ENCODE measurements at regions of chr6 and their contacts with region 1.

Region 1: DNA sequence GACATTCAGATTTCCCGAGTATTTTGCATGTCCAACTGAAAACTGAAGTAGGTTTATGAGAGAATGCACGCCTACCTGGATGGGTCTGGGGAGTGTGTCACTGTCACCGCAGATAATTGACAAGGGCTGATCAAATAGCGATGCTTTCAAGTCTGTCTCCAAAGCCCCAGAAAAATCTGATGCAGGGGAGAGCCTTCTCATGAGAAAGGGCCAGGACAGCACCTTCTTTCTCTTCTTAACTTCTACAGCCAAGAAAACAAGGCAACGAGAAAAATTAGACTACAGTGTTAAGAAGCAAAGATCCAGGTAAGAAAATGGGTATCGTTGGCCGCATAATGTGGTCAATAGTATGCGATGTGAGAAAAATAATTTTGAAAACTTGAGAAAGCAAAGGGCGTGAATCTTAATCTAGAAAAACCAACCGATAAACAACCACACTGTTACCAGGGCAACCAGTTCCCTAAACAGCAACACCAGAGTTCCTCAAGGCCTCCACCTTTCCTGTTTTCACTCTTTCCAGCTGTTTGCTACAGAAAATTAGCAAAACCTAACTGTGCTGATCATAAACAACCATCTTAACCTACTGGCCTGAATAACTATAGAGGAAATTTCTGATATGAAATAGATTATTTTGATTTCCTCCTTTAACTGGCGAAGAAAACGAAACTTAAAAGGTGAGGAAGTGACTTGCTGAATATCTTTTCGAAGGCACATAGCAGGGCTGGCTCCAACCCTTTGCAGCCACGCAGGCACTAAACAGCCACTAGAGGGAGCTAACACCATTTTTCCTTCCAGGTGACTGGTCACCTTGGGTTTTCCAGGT is 2.6 kb downstream of the TAGAP start:
- DNase-seq: peak; percentile 84 to 97 (median 92)
- H3K4me3 ChIP-seq: peak overlapping the region; percentile 69 to 96 (median 84)
- H3K4me3 Mint-ChIP-seq: peak overlapping the region; percentile 96
- H3K27ac ChIP-seq: peak overlapping the region; percentile 99 to 100
- H3K27ac Mint-ChIP-seq: peak overlapping the region; percentile 100
- H3K4me1 ChIP-seq: peaks cover 68 to 75% of the 10 kb centered on the region in 2 donors
- H3K4me1 Mint-ChIP-seq: peaks cover 63% of the 10 kb centered on the region
- H3K27me3 ChIP-seq: no peaks in the 10 kb centered on the region
- H3K27me3 Mint-ChIP-seq: peaks cover 0 to 2% (median 2%) of the 10 kb centered on the region in 3 donors
- CTCF ChIP-seq: peak; percentile 100

Region 2: GRCh38 chr6:158999666-159000403 is 42.4 kb before region 1 on chr6 and contains the start of gene RSPH3:
- intact Hi-C with region 1: loop called (anchors 5 kb)
- DNase-seq: peak; percentile 74 to 79 (median 75)
- H3K4me3 ChIP-seq: peak within 1 kb of the TSS; percentile 61 to 90 (median 80)
- H3K4me3 Mint-ChIP-seq: peak within 1 kb of the TSS; percentile 99 to 100
- H3K27ac ChIP-seq: peak within 1 kb of the TSS; percentile 82 to 87
- H3K27ac Mint-ChIP-seq: peak within 1 kb of the TSS; percentile 90 to 96 (median 95)
- H3K4me1 ChIP-seq: peaks cover 34 to 48% of the 10 kb centered on the region in 2 donors
- H3K4me1 Mint-ChIP-seq: peaks cover 43% of the 10 kb centered on the region
- H3K27me3 ChIP-seq: no peaks in the 10 kb centered on the region
- H3K27me3 Mint-ChIP-seq: peaks cover 0 to 3% (median 1%) of the 10 kb centered on the region in 3 donors
- CTCF ChIP-seq: no peak
- polyA plus RNA-seq, gene RSPH3: 2.8 to 9.6 (median 4.6) TPM

Region 3: GRCh38 chr6:159008656-159009288 is 33.4 kb before region 1 on chr6:
- intact Hi-C with region 1: loop called (anchors 5 kb)
- DNase-seq: peak; percentile 22 to 76 (median 49)
- H3K4me3 ChIP-seq: peak overlapping the region in 1 of 3 experiments; percentile 48
- H3K4me3 Mint-ChIP-seq: peak overlapping the region; percentile 38 to 54
- H3K27ac ChIP-seq: peak overlapping the region in 1 of 2 donors; percentile 68
- H3K27ac Mint-ChIP-seq: peak overlapping the region in 6 of 7 donors; percentile 12 to 71 (median 63)
- H3K4me1 ChIP-seq: peaks cover 29 to 37% of the 10 kb centered on the region in 2 donors
- H3K4me1 Mint-ChIP-seq: peaks cover 45% of the 10 kb centered on the region
- H3K27me3 ChIP-seq: no peaks in the 10 kb centered on the region
- H3K27me3 Mint-ChIP-seq: peaks cover 0 to 2% (median 0%) of the 10 kb centered on the region in 3 donors
- CTCF ChIP-seq: peak; percentile 75

Region 4: GRCh38 chr6:159062564-159062945 is 20.3 kb after region 1 on chr6:
- intact Hi-C with region 1: loop called in 1 of 2 experiments (anchors 2 kb)
- DNase-seq: peak; percentile 46 to 68 (median 63)
- H3K4me3 ChIP-seq: peak overlapping the region in 1 of 3 experiments; percentile 52
- H3K4me3 Mint-ChIP-seq: peak overlapping the region; percentile 39 to 75
- H3K27ac ChIP-seq: peak overlapping the region; percentile 76 to 94
- H3K27ac Mint-ChIP-seq: peak overlapping the region; percentile 93 to 99 (median 97)
- H3K4me1 ChIP-seq: peaks cover 50 to 55% of the 10 kb centered on the region in 2 donors
- H3K4me1 Mint-ChIP-seq: peaks cover 57% of the 10 kb centered on the region
- H3K27me3 ChIP-seq: no peaks in the 10 kb centered on the region
- H3K27me3 Mint-ChIP-seq: no peaks in the 10 kb centered on the region
- CTCF ChIP-seq: no peak

Region 5: DNA sequence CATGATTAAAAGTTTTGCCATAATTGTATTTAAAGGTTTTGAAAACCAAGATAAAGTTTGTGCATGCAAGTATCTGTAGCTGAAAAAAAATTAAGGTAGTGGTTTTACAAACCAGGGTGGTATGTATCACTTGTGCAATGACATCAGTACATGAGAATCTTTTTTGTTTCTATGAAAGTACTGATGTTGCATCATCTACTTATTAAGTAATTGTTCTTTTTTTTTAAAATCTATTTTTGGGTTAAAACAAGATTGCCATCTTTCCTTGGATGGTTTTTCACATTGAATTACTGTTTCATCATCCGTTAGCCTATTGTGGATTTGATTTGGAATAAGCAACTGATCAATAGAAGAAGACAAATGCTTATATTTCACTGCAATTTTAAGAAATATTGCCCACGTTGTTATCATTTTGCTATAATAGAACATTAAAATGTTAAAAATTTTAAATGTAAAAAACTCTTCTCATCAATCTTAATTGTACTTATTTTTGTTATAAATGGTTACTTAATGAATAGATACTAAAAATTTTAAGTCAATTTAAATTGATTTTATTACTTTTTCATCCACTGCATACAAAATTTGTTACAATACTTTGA is 42.4 kb after region 1 on chr6:
- intact Hi-C with region 1: loop called in 1 of 2 experiments (anchors 5 kb)
- DNase-seq: peak; percentile 64 to 87 (median 81)
- H3K4me3 ChIP-seq: no peak overlapping the region
- H3K4me3 Mint-ChIP-seq: no peak overlapping the region
- H3K27ac ChIP-seq: peak overlapping the region; percentile 58 to 69
- H3K27ac Mint-ChIP-seq: peak overlapping the region in 6 of 7 donors; percentile 67 to 91 (median 82)
- H3K4me1 ChIP-seq: peaks cover 22 to 45% of the 10 kb centered on the region in 2 donors
- H3K4me1 Mint-ChIP-seq: peaks cover 25% of the 10 kb centered on the region
- H3K27me3 ChIP-seq: no peaks in the 10 kb centered on the region
- H3K27me3 Mint-ChIP-seq: no peaks in the 10 kb centered on the region
- CTCF ChIP-seq: no peak

Region 6: DNA sequence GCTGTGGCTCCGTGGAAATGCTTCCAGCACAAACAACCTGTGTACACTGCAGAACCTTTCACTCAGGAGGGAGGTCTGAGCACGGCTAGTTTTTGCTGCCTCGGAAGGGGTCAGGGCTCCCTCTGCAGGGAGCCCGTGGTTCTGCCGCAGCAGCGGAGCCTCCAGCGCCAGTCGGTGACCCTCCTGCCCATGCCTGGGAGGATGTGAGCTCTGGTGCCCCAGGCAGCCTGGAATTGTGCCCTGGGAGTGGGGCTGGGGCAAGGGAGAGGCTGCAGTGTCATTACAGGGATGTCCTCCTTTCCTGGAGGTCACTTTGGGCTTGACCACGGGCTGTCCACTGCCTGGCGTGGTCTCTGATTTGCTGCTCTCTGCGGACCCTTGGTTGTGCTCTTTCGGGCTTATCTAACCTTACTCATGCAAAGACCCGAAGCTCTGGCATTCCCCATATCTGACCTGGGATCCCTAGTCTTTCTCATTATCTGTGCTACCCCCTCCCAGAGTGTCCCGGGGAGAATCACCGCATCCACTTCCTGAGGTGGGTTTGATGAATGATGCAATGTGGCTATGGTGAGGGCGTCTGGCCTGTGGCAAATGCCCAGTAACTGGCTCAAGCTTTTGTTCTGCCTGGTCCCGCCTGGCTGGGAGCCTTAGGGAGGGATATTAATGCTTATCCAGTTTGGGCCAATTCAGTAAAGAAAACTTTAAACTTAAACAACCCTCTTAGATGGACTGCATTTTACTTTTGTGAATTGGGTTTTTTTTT is 62.1 kb after region 1 on chr6:
- intact Hi-C with region 1: loop called (anchors 5 kb)
- DNase-seq: peak; percentile 76 to 82 (median 79)
- H3K4me3 ChIP-seq: no peak overlapping the region
- H3K4me3 Mint-ChIP-seq: peak overlapping the region in 1 of 2 donors; percentile 4
- H3K27ac ChIP-seq: peak overlapping the region in 1 of 2 donors; percentile 18
- H3K27ac Mint-ChIP-seq: peak overlapping the region in 6 of 7 donors; percentile 73 to 85 (median 80)
- H3K4me1 ChIP-seq: peaks cover 33 to 44% of the 10 kb centered on the region in 2 donors
- H3K4me1 Mint-ChIP-seq: peaks cover 57% of the 10 kb centered on the region
- H3K27me3 ChIP-seq: no peaks in the 10 kb centered on the region
- H3K27me3 Mint-ChIP-seq: peaks cover 0 to 1% (median 0%) of the 10 kb centered on the region in 3 donors
- CTCF ChIP-seq: peak; percentile 95

Region 7: GRCh38 chr6:159116343-159116742 is 74.1 kb after region 1 on chr6:
- intact Hi-C with region 1: loop called in 1 of 2 experiments (anchors 5 kb)
- DNase-seq: peak; percentile 81 to 88 (median 86)
- H3K4me3 ChIP-seq: peak overlapping the region in 1 of 3 experiments; percentile 46
- H3K4me3 Mint-ChIP-seq: peak overlapping the region in 1 of 2 donors; percentile 39
- H3K27ac ChIP-seq: peak overlapping the region; percentile 97 to 99
- H3K27ac Mint-ChIP-seq: peak overlapping the region; percentile 99 to 100 (median 100)
- H3K4me1 ChIP-seq: peaks cover 86 to 87% of the 10 kb centered on the region in 2 donors
- H3K4me1 Mint-ChIP-seq: peaks cover 84% of the 10 kb centered on the region
- H3K27me3 ChIP-seq: no peaks in the 10 kb centered on the region
- H3K27me3 Mint-ChIP-seq: peaks cover 0 to 4% (median 0%) of the 10 kb centered on the region in 3 donors
- CTCF ChIP-seq: no peak

Measured in CD14-positive monocyte (primary cell).